GM10248 (cell line): ENCODE measurements at regions of chr11 and their contacts with region 1.

Region 1: GRCh38 chr11:46367244-46367915 is 14.1 kb upstream of the MDK start:
- DNase-seq: peak; percentile 81
- CTCF ChIP-seq: peak; percentile 93

Region 2: GRCh38 chr11:45982656-45983470 is 384.5 kb before region 1 on chr11:
- CTCF ChIA-PET with region 1: no interaction called
- POLR2A ChIA-PET with region 1: no interaction called
- DNase-seq: no peak
- CTCF ChIP-seq: no peak

Region 3: DNA sequence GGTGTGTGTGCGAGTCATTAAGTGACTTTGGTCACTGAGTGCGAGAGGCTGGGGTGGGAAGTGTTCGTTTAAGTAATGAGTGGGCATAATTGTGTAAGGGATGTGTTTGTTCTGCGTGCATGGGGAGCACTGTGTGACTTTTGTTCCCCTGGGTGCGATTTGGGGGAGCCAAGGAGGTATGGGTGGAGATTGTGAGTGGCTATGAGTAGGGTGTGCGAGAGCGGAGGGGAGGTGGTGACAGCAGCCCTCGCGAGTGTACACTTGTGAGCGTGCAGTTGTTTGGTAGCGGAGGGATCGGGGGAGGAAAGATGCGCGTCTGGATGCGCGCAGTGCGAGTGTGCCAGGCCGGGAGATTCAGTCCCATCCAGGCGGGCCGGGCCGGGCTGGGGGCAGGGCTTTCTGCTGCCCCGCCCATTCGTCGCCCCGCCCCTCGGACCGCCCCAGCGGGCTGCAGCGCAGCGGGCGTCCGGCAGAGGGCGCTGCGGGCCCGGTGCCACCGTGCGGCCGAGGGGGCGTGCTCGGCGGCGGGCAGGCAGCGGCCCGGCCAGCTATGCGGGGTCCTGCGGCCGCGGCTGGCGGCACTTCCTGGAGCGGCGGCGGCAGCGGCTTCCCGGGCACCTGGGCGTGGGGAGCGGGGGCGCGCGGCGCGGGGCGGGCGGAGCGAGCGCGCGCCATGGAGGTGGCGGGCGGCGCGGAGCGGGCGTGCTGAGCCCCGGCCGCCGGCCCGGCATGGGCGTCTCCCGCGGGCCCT is 20.3 kb before region 1 on chr11 and contains the start of gene DGKZ:
- CTCF ChIA-PET with region 1: interaction called, 452 read pairs
- POLR2A ChIA-PET with region 1: no interaction called
- DNase-seq: peak; percentile 94
- CTCF ChIP-seq: peak; percentile 97

Region 4: DNA sequence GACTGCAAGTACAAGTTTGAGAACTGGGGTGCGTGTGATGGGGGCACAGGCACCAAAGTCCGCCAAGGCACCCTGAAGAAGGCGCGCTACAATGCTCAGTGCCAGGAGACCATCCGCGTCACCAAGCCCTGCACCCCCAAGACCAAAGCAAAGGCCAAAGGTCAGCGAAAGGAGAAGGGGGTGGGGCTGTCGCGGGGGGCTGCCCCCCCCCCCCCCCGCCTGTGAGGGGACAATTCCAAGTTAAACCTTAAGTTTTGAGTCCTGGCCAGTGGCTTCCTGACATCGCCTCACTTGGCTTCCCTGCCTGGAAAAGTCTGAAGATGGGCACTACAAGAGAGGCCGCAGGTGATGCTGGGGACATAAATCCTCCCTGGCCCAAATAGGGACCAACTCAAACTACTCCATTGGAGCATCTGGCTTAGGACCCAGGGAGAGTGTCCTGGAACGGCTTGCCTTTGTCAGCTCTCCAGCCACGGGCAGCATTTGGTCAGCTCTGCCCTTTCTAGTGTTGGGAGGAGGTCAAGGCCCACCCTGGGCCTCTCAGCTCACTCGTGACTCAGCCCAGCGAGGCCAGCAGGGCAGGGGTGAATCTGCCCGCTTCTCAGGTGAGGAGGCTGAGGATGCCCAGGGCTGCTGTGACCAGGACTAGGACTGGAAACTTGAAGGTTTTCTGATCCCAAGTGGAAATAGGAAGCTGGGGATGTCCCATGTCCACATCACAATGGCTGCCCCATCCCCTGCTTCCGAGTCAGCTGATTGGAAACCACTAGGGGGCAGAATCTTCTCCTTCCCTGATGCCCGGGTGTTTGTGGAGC is 15.4 kb after region 1 on chr11:
- CTCF ChIA-PET with region 1: interaction called, 21 read pairs
- POLR2A ChIA-PET with region 1: no interaction called
- DNase-seq: no peak
- CTCF ChIP-seq: no peak

Region 5: GRCh38 chr11:46537537-46538295 is 170.3 kb after region 1 on chr11:
- CTCF ChIA-PET with region 1: interaction called, 13 read pairs
- POLR2A ChIA-PET with region 1: no interaction called
- DNase-seq: peak; percentile 75
- CTCF ChIP-seq: peak; percentile 82